ENCODE measurements at regions of chr1 and their contacts with region 1.

Region 1: GRCh38 chr1:185733818-185734771 is at the start of gene HMCN1:
- DNase-seq: peak; percentile 26 to 32
- ATAC-seq: peak; percentile 93 to 94
- H3K4me3 ChIP-seq: peak within 1 kb of the TSS; percentile 54
- H3K27ac ChIP-seq: peak within 1 kb of the TSS; percentile 1 to 71; a peak in 4 of 6 replicates
- H3K4me1 ChIP-seq: 0 out of 3 replicates have a peak, but pooled peaks cover 10% of the 10 kb centered on the region
- CTCF ChIP-seq: peak; percentile 40; the same call in 2 of the 3 replicates
- EP300 ChIP-seq: no peak
- POLR2A ChIP-seq: no peak
- RAD21 ChIP-seq: peak in 1 of 2 experiments; percentile 14; a peak in 1 of 5 replicates
- polyA plus RNA-seq, gene HMCN1: 0.06 and 0.09 TPM in 2 replicates

Region 2: DNA sequence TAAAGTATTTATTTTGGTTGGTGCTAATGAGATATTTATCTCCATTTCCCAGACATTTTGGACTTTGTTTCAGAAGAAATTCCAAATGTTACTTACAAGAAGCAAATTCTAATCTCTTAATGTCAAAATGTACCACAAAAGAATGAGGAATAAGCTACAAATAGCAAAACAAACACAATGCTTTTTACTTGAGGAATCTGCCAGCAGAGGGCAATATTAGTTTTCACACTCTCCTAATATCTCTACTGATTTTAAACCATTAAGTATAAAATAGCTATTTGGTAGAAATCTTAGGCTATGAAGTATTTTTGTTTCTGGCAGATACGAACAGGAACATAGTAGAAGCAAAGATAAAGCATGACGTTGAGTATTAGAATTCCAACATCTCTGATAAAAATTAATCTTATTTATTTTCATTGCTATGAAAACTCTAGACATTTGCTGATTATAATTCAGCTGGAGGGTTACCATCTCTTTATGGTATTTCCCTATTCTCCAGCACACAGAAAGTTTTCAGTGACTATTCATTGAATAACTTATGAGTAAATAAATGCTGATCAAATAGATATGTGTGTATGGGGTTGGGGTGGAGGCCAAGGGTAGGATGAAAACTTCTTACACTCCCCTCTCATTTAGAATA is 13.3 kb before region 1 on chr1:
- CTCF ChIA-PET with region 1: interaction called, 32 read pairs
- POLR2A ChIA-PET with region 1: no interaction called
- DNase-seq: peak in 1 of 2 experiments; percentile 46
- ATAC-seq: peak; percentile 54 to 75; a peak in 3 of 6 replicates
- H3K4me3 ChIP-seq: no peak overlapping the region
- H3K27ac ChIP-seq: no peak overlapping the region
- H3K4me1 ChIP-seq: peaks cover 8% of the 10 kb centered on the region; the same call in 2 of the 3 replicates
- CTCF ChIP-seq: peak; percentile 70
- EP300 ChIP-seq: no peak
- POLR2A ChIP-seq: no peak
- RAD21 ChIP-seq: peak; percentile 61 to 63

Measured in A549 (cell line).